Spleen (tissue), 13 donors: ENCODE measurements at regions of chr18 and their contacts with region 1.

Region 1: GRCh38 chr18:11937874-11938478 is 29.9 kb upstream of the MPPE1 start:
- DNase-seq: peak; percentile 90
- H3K4me3 ChIP-seq: no peak overlapping the region
- H3K27ac ChIP-seq: peak overlapping the region in 2 of 8 donors; percentile 26 to 33
- H3K4me1 ChIP-seq: peaks cover 0 to 11% (median 5%) of the 10 kb centered on the region in 6 donors
- H3K27me3 ChIP-seq: no peaks in the 10 kb centered on the region
- CTCF ChIP-seq: peak; percentile 47 to 84 (median 69)
- POLR2A ChIP-seq: no peak

Region 2: DNA sequence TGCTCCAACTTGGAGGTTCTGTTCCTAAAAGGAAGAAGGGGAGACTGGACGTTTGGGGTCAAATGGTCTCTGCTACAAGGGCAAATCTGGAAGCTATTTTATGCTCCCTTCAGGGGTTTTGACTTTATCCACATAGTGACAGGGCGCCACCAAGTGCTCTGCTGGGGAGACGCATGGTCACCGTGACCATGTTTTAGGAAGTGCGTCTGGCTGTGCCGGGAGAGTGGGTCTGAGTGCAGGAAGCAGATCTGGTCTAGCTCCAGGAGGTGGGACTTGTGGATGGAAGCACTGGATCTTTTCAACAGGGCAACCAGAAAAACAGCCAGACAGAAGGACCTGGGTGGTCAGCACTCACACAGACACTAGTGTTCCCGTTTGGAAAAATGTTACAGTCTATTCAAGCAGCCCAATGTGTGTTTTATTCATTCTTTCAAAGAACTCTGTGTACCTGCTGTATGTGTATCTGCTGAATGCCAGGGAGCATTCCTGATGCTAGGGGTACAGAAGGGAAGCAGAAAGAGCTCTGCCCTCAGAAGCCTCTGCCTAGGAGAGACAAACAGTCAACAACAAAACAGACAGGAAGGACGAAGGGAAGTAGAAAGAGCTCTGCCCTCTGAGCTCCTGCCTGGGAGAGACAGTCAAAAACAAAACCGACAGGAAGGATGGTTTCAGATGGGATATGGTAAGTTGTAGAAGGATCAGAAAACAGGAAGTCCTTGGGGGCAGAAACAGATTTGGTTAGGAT is 57.6 kb after region 1 on chr18:
- intact Hi-C with region 1: loop called (anchors 2 kb)
- DNase-seq: peak; percentile 91
- H3K4me3 ChIP-seq: peak overlapping the region in 1 of 8 donors; percentile 42
- H3K27ac ChIP-seq: peak overlapping the region in 7 of 8 donors; percentile 0 to 76 (median 39)
- H3K4me1 ChIP-seq: peaks cover 7 to 31% (median 16%) of the 10 kb centered on the region in 6 donors
- H3K27me3 ChIP-seq: no peaks in the 10 kb centered on the region
- CTCF ChIP-seq: peak; percentile 48 to 89 (median 78)
- POLR2A ChIP-seq: no peak

Region 3: GRCh38 chr18:12038639-12039417 is 100.9 kb after region 1 on chr18:
- intact Hi-C with region 1: loop called (anchors 5 kb)
- DNase-seq: peak; percentile 96
- H3K4me3 ChIP-seq: peak overlapping the region; percentile 40 to 75 (median 54)
- H3K27ac ChIP-seq: no peak overlapping the region
- H3K4me1 ChIP-seq: peaks cover 6 to 24% (median 14%) of the 10 kb centered on the region in 6 donors
- H3K27me3 ChIP-seq: peaks cover 0 to 16% (median 8%) of the 10 kb centered on the region in 7 donors
- CTCF ChIP-seq: peak; percentile 97 to 99 (median 99)
- POLR2A ChIP-seq: no peak